ENCODE measurements at regions of chr9 and their contacts with region 1.

Region 1: GRCh38 chr9:122897969-122898368 is 7.2 kb downstream of the RC3H2 start:
- DNase-seq: no peak
- H3K4me3 ChIP-seq: no peak overlapping the region
- H3K4me3 Mint-ChIP-seq: no peak overlapping the region
- H3K27ac Mint-ChIP-seq: no peak overlapping the region
- H3K4me1 ChIP-seq: no peaks in the 10 kb centered on the region; the same call in 1 of the 2 replicates
- H3K4me1 Mint-ChIP-seq: peaks cover 8% of the 10 kb centered on the region
- H3K27me3 ChIP-seq: no peaks in the 10 kb centered on the region
- H3K27me3 Mint-ChIP-seq: no peaks in the 10 kb centered on the region
- CTCF ChIP-seq: no peak

Region 2: GRCh38 chr9:123742009-123742767 is 844.2 kb after region 1 on chr9:
- CTCF ChIA-PET with region 1: no interaction called
- POLR2A ChIA-PET with region 1: no interaction called
- intact Hi-C with region 1: no loop called
- DNase-seq: no peak
- H3K4me3 ChIP-seq: no peak overlapping the region
- H3K4me3 Mint-ChIP-seq: no peak overlapping the region
- H3K27ac Mint-ChIP-seq: no peak overlapping the region
- H3K4me1 ChIP-seq: no peaks in the 10 kb centered on the region
- H3K4me1 Mint-ChIP-seq: peaks cover 8% of the 10 kb centered on the region
- H3K27me3 ChIP-seq: no peaks in the 10 kb centered on the region
- H3K27me3 Mint-ChIP-seq: no peaks in the 10 kb centered on the region
- CTCF ChIP-seq: no peak

Region 3: DNA sequence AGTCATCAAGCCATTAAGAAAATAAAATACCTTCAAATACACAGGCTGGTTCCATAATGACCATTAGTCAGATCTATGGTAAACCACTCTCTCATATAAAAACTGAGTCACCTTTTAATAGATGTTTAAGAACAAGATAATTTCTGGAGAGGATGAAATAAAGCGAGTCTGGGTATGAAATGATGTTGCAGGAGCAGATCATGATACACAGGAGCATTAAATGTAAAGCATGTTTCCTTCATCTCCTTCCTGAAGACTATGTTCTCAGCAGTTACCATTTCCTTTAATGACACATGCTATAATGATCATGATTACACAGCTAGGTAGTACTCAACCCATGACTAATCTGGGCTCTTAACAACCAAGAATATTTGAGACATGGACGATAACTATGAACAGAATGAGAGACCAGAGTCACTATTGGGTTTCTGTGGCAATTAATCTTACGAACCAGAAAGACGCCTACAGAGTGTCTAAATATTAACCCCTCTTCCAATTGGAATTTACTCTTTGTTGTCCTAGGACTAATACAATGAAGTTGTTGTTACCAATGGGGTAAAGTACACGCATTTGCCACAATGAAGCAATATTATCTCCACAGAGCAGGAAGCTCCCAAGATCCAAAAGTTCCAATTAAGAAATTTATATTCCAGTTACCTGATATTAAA is 1767.6 kb after region 1 on chr9:
- CTCF ChIA-PET with region 1: no interaction called
- POLR2A ChIA-PET with region 1: interaction called, 12 read pairs
- intact Hi-C with region 1: no loop called
- DNase-seq: no peak
- H3K4me3 ChIP-seq: no peak overlapping the region
- H3K4me3 Mint-ChIP-seq: no peak overlapping the region
- H3K27ac Mint-ChIP-seq: no peak overlapping the region
- H3K4me1 ChIP-seq: peaks cover 26% of the 10 kb centered on the region
- H3K4me1 Mint-ChIP-seq: peaks cover 10% of the 10 kb centered on the region
- H3K27me3 ChIP-seq: no peaks in the 10 kb centered on the region
- H3K27me3 Mint-ChIP-seq: no peaks in the 10 kb centered on the region
- CTCF ChIP-seq: no peak

Measured in Caco-2 (cell line).